Psoas muscle (tissue), 8 donors: ENCODE measurements at regions of chr5 and their contacts with region 1.

Region 1: DNA sequence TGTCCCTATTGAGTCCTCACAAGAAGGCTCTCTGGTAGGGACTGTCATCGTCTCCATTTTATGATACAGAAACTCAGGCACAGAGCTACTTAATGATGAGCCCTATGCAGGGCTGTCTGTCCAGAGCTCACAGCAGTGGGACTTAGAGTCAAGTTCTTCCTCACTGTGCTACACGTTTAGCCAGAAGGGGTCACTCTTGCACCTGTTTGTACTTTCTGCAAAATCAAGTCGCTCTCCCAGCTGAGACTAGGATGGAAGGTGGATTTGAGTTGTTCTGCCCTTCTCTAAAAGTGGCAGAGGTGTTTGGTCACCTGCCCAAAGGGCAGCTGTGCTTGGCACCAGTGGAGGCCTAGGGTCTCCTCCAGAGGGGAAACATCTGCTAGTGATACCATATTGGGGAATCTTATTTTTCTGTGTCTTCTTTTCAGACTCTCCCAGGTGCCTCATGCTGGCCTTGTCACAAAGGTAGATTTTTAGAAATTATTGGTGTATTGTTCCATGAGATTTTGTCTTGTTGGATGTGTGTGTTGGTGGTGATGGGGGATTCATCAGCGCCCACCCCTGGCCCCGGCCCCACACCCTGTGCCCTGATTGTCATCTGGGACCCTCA is 104.2 kb downstream of the PPARGC1B start:
- DNase-seq: no peak
- ATAC-seq: peak; percentile 47 to 80 (median 68)
- H3K4me3 ChIP-seq: no peak overlapping the region
- H3K27ac ChIP-seq: no peak overlapping the region
- H3K4me1 ChIP-seq: peaks cover 6% of the 10 kb centered on the region
- H3K27me3 ChIP-seq: no peaks in the 10 kb centered on the region
- CTCF ChIP-seq: peak; percentile 69

Region 2: GRCh38 chr5:149759986-149760853 is 74.1 kb before region 1 on chr5:
- intact Hi-C with region 1: loop called (anchors 5 to 10 kb)
- DNase-seq: no peak
- ATAC-seq: peak; percentile 51 to 62 (median 55)
- H3K4me3 ChIP-seq: no peak overlapping the region
- H3K27ac ChIP-seq: peak overlapping the region; percentile 23
- H3K4me1 ChIP-seq: peaks cover 62% of the 10 kb centered on the region
- H3K27me3 ChIP-seq: no peaks in the 10 kb centered on the region
- CTCF ChIP-seq: no peak

Region 3: DNA sequence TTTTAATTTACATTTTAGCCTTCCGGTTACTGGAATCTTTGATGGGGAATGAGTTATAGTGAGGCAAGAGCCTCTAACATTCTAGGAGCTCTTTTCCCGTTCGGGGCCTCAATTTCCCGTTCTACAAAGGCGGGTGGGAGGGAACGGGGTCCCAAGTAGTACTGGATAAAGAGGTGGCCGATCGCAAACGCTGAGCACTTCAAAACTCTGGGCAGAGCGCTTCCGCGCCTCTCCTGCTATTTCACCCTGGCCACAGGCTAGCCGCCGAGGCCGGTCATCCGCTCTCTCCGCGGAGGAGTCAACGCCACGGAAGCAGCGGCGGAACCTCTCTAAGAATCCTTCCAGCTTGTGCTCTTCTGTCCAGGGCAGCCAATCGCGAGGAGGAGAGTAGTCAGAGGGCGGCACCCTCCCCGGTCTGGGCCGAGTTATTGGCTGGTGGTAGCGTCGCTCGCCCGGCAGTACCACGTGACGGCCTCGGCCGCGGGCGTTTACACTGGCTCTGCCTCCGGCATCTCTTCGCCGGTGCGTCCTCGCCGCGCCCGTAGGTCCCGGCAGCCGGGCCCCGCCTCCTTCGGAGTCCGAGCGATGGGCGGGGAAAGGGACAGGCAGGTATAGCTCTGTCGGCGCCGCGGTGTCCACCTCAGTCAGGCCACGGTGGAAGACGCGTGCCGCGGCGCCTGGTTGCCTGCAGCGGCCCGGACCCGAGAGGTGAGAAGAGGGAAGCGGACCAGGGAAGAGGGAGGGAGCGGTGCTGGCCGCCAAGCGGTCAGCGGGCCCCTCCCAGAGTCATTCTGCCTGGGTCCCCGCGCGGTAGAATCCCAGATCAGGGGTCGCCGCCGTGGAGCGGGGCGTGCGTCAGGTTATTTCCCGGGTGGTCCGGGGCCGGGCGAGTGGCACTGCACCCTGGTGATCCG is 126.2 kb after region 1 on chr5 and contains the start of gene SLC26A2:
- intact Hi-C with region 1: loop called in 1 of 2 experiments (anchors 5 kb)
- DNase-seq: peak; percentile 98
- ATAC-seq: peak; percentile 99 to 100 (median 99)
- H3K4me3 ChIP-seq: peak within 1 kb of the TSS; percentile 72
- H3K27ac ChIP-seq: peak within 1 kb of the TSS; percentile 92
- H3K4me1 ChIP-seq: no peaks in the 10 kb centered on the region
- H3K27me3 ChIP-seq: no peaks in the 10 kb centered on the region
- CTCF ChIP-seq: no peak
- total RNA-seq, gene SLC26A2: 4.1 to 20.1 (median 6.4) TPM